Activated CD4-positive, alpha-beta T cell treated with anti-CD3 and anti-CD28 coated beads for 36 hours (primary cell): ENCODE measurements at regions of chrX and their contacts with region 1.

Region 1: GRCh38 chrX:155056877-155057792 is 13.8 kb downstream of the CMC4 start:
- DNase-seq: peak; percentile 63
- ATAC-seq: peak; percentile 82
- H3K4me3 Mint-ChIP-seq: peak overlapping the region; percentile 21
- H3K27ac Mint-ChIP-seq: peak overlapping the region; percentile 25
- H3K4me1 Mint-ChIP-seq: peaks cover 33% of the 10 kb centered on the region
- H3K27me3 Mint-ChIP-seq: no peaks in the 10 kb centered on the region

Region 2: DNA sequence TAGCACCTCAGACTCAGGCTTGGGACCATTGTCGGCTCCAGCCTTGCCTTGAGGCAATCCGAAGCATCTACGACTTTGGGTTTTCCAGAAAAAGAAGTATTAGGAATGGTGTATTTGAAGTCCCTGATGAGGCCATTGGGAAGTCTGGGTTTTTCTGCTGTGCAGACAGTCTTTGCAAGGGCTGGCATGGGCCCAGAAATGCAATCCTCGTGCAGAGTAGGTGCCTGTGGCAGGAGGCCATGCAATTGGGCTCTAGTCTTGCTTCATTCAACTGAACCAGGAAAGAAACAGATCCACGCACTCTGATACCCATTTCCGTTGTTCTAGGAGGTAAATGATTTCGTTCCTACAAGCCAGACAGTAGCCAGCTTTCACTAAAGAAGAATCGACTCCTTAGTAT is 1633.5 kb before region 1 on chrX:
- CTCF ChIA-PET with region 1: no interaction called
- POLR2A ChIA-PET with region 1: no interaction called
- intact Hi-C with region 1: no loop called
- DNase-seq: no peak
- ATAC-seq: no peak
- H3K4me3 Mint-ChIP-seq: no peak overlapping the region
- H3K27ac Mint-ChIP-seq: no peak overlapping the region
- H3K4me1 Mint-ChIP-seq: no peaks in the 10 kb centered on the region
- H3K27me3 Mint-ChIP-seq: no peaks in the 10 kb centered on the region

Region 3: DNA sequence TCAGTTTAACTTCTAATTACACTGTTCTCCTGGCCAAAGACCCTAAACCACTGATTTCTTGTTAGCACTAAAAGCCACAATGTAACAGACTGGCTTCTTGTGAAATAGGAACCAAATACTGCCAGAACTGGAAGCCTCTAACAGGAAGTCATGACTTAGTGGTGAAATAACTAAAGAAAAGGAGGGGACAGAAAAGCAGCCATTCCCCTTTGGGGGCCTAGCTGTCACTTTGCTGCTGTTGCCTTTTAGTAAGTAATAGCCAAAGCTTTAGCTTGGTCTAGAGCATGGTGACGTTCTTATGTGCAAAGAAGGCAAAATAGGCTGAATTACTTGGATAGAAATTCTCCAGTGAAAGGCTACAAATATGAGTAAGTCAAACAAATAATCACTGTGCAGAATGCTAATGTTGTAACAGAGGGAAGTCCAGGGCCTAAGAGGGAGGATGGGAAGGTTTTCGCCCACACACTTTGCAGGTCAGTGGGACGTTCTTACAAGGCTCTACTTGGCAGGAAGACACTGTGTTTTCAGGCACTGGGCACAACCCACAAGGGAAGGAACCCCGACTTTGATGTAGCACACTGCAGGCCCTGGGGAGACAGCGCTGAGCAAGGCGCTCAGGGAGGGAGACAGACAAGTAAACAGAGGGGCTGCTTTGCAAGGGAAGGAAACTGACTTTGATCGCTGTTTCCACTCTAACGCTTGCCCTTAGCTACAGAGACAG is 322.9 kb before region 1 on chrX:
- CTCF ChIA-PET with region 1: no interaction called
- POLR2A ChIA-PET with region 1: no interaction called
- intact Hi-C with region 1: no loop called
- DNase-seq: peak; percentile 16
- ATAC-seq: peak; percentile 63
- H3K4me3 Mint-ChIP-seq: peak overlapping the region; percentile 56
- H3K27ac Mint-ChIP-seq: peak overlapping the region; percentile 90
- H3K4me1 Mint-ChIP-seq: peaks cover 83% of the 10 kb centered on the region
- H3K27me3 Mint-ChIP-seq: no peaks in the 10 kb centered on the region

Region 4: DNA sequence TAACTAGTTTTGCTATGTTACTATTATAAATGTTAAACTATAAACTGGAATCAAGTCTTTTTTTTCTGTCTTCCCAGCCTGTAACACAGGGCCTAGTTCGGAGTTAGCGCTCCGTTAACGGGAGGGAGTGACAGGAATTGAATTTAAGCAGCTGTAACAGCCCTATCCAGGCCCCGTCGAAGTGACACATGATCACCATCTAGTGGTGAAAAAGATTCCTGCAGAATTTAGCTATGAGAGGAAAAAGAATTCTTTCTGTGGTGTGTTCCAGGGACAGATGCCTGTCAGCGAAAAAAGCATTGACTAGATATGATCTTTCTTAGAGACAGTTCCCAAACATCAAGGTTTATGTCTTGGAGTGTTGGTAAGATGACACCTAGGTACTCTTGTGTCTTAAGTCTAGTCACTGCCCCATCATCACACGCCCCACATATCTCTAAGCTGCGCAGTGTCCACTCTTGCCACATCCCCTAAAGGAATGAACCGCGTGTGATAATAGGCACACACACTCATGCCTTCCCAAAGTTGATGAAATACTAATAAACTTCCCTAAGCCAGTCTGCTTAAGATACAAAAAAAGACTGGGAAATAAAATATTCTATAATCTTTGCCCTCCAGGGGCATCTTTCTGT is 308.3 kb before region 1 on chrX:
- CTCF ChIA-PET with region 1: no interaction called
- POLR2A ChIA-PET with region 1: no interaction called
- intact Hi-C with region 1: no loop called
- DNase-seq: peak; percentile 55
- ATAC-seq: peak; percentile 83
- H3K4me3 Mint-ChIP-seq: no peak overlapping the region
- H3K27ac Mint-ChIP-seq: no peak overlapping the region
- H3K4me1 Mint-ChIP-seq: peaks cover 22% of the 10 kb centered on the region
- H3K27me3 Mint-ChIP-seq: peaks cover 2% of the 10 kb centered on the region

Region 5: DNA sequence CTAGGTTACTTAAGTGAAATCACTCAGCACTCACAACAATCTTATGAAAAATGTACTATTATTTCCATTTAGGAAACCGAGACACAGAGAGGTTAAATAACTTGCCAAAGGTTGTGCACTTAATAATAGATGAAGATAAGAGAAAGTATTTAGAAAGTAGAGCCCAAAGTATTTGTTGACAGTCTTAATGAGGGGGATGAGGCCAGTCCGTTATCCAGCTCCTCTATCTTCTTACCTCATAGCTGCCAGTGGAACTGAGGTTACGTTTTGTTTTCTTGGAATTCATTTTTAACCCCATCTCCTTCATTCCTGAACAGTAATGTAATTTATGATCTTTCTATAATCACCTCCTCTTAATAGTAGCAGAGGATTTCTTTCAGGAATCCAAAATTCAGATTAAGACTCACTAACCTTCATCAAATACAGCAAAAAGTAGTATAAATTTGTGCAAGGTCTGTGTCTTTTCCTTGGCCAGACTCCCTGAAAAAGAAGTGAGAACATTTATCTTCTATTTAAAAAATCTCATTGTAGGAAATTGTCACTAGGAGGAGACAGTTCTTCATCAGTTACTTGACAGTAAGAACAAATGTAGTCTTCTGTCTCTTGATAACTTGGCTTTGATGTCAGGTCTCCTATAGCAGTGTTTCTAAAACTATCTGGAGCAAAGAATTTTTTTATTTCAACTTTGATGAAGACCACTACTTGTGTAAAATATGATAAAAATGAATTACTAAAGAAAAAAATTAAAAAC is 70.1 kb before region 1 on chrX:
- CTCF ChIA-PET with region 1: interaction called, 15 read pairs
- POLR2A ChIA-PET with region 1: interaction called, 6 read pairs
- intact Hi-C with region 1: loop called in 1 of 2 experiments (anchors 1 kb)
- DNase-seq: no peak
- ATAC-seq: no peak
- H3K4me3 Mint-ChIP-seq: no peak overlapping the region
- H3K27ac Mint-ChIP-seq: no peak overlapping the region
- H3K4me1 Mint-ChIP-seq: peaks cover 19% of the 10 kb centered on the region
- H3K27me3 Mint-ChIP-seq: peaks cover 3% of the 10 kb centered on the region

Region 6: DNA sequence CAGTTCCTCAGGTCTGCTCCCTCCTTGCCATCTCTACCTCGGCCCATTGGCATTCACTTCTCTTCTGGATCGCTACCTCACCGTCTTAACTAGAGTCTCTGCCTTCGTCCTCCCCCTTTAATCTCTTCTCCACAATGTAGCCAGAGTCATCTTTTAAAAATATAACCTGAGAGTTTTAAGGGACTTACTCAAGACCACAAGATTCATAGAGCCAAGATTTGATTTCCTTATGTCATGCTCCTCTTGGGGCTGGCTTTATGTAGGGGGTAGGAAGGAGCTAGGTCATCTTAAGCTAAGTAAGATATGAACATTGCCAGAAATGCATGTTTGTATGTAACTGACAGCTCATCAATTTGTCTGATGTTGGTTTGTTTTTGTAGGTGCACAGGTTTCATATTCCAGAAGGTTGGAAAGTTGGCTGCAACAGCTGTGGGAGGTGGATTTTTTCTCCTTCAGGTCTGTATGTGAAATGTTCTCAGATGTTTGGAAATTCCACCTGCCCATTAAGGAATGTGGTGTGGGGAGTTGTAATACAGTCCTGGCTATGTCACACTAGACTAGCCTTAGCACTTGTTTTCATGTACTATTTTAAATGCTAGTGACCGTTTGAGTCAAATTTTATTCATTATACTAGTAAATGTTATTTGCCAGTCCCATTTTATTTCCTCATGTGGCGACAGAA is 10.9 kb before region 1 on chrX:
- CTCF ChIA-PET with region 1: interaction called, 13 read pairs
- POLR2A ChIA-PET with region 1: no interaction called
- intact Hi-C with region 1: no loop called
- DNase-seq: no peak
- ATAC-seq: no peak
- H3K4me3 Mint-ChIP-seq: no peak overlapping the region
- H3K27ac Mint-ChIP-seq: no peak overlapping the region
- H3K4me1 Mint-ChIP-seq: peaks cover 35% of the 10 kb centered on the region
- H3K27me3 Mint-ChIP-seq: no peaks in the 10 kb centered on the region

Region 7: GRCh38 chrX:155127940-155128339 is 70.8 kb after region 1 on chrX:
- CTCF ChIA-PET with region 1: no interaction called
- POLR2A ChIA-PET with region 1: no interaction called
- intact Hi-C with region 1: no loop called
- DNase-seq: no peak
- ATAC-seq: no peak
- H3K4me3 Mint-ChIP-seq: no peak overlapping the region
- H3K27ac Mint-ChIP-seq: no peak overlapping the region
- H3K4me1 Mint-ChIP-seq: no peaks in the 10 kb centered on the region
- H3K27me3 Mint-ChIP-seq: no peaks in the 10 kb centered on the region